Activated T-helper 1 cell treated with anti-CD3 and anti-CD28 coated beads, Interleukin-12 subunit alpha, Interleukin-12 subunit beta, Interleukin-2, Interleukin-4 antibody, amounts not matched to agents 30 ng/mL and 10 ng/mL and 1 ng/mL, durations not matched to agents 14 hours and 24 hours and 36 hours (primary cell): ENCODE measurements at regions of chr6 and their contacts with region 1.

Region 1: DNA sequence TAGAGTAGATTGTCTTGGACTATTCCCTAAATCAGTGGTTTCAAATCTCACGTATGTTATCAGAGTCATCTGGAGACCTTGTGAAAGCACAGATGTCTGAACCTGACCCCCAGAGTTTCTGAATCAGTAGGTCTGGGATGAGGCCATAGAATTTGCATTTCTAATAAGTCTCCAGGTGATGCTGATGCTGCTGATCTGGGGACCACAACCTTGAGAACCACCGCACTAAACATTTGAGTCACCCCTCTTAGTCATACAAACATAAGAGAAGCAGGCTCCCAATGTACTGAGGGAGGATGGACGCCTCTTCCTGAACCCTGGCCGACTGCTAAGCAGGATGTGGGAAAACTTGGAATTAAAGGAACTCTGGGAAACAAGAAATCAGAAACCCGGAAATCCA is 187.8 kb upstream of the PRDM1 start:
- DNase-seq: no peak
- H3K4me3 Mint-ChIP-seq: no peak overlapping the region
- H3K27ac Mint-ChIP-seq: no peak overlapping the region
- H3K4me1 Mint-ChIP-seq: peaks cover 34% of the 10 kb centered on the region
- H3K27me3 Mint-ChIP-seq: no peaks in the 10 kb centered on the region

Region 2: DNA sequence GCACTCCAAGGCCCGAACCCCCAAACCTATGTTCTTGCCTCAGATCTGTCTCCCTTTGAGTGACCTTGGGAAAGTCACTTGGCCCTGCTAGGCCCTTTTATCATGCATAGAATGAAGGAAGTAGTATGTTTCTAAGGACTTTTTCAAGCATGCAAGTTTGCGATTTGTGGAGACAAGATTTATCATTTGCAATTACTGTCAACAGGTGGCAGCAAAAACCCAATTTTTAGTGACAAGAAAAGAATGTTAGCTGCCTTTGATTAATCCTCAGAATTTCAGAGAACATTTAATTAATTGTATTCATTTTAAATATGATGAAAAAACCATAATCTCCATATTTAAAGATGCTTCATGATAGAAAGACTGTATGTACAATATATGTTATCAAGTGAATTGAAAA is 467.1 kb before region 1 on chr6:
- intact Hi-C with region 1: loop called (anchors 5 kb)
- DNase-seq: peak; percentile 12
- H3K4me3 Mint-ChIP-seq: no peak overlapping the region
- H3K27ac Mint-ChIP-seq: no peak overlapping the region
- H3K4me1 Mint-ChIP-seq: peaks cover 5% of the 10 kb centered on the region
- H3K27me3 Mint-ChIP-seq: peaks cover 35% of the 10 kb centered on the region

Region 3: GRCh38 chr6:105733565-105734162 is 164.6 kb before region 1 on chr6:
- intact Hi-C with region 1: loop called (anchors 2 kb)
- DNase-seq: no peak
- H3K4me3 Mint-ChIP-seq: no peak overlapping the region
- H3K27ac Mint-ChIP-seq: no peak overlapping the region
- H3K4me1 Mint-ChIP-seq: peaks cover 44% of the 10 kb centered on the region
- H3K27me3 Mint-ChIP-seq: peaks cover 3% of the 10 kb centered on the region

Region 4: GRCh38 chr6:105793130-105793529 is 105.2 kb before region 1 on chr6:
- intact Hi-C with region 1: loop called (anchors 2 kb)
- DNase-seq: no peak
- H3K4me3 Mint-ChIP-seq: peak overlapping the region; percentile 5
- H3K27ac Mint-ChIP-seq: peak overlapping the region; percentile 66
- H3K4me1 Mint-ChIP-seq: peaks cover 86% of the 10 kb centered on the region
- H3K27me3 Mint-ChIP-seq: no peaks in the 10 kb centered on the region

Region 5: GRCh38 chr6:105981002-105981887 is 83.0 kb after region 1 on chr6:
- intact Hi-C with region 1: loop called (anchors 1 kb)
- DNase-seq: peak; percentile 48
- H3K4me3 Mint-ChIP-seq: peak overlapping the region; percentile 84
- H3K27ac Mint-ChIP-seq: peak overlapping the region; percentile 91
- H3K4me1 Mint-ChIP-seq: peaks cover 79% of the 10 kb centered on the region
- H3K27me3 Mint-ChIP-seq: no peaks in the 10 kb centered on the region

Region 6: DNA sequence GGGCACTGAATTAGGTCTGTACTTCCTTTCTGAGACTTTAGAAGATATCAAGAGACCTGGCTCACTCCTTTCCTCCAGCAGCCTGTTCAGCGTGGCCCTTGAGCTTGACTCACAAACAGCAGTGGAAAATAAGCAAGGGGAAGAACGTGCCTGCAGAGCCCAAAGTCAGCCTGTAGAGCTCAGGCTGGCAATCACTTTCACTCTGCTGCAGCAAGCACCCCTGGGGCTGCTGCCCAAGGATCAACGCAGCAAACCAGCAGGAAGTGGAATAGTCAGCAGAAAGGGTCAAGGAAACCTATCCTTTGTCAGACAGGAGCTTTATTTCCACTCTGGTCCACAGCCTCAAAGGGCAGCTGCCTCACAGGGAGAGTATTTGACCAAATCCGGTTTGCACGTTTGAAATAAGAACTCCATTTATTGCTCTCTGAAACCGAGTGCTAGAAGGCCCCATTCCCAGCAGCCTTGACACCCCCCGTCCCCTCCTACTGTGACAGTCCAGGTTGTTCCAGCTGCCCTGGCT is 265.2 kb after region 1 on chr6:
- intact Hi-C with region 1: loop called (anchors 1 kb)
- DNase-seq: peak; percentile 49
- H3K4me3 Mint-ChIP-seq: peak overlapping the region; percentile 69
- H3K27ac Mint-ChIP-seq: peak overlapping the region; percentile 98
- H3K4me1 Mint-ChIP-seq: peaks cover 73% of the 10 kb centered on the region
- H3K27me3 Mint-ChIP-seq: peaks cover 3% of the 10 kb centered on the region

Region 7: GRCh38 chr6:106194949-106195921 is 296.9 kb after region 1 on chr6:
- intact Hi-C with region 1: loop called (anchors 2 kb)
- DNase-seq: no peak
- H3K4me3 Mint-ChIP-seq: peak overlapping the region; percentile 58
- H3K27ac Mint-ChIP-seq: peak overlapping the region; percentile 78
- H3K4me1 Mint-ChIP-seq: peaks cover 56% of the 10 kb centered on the region
- H3K27me3 Mint-ChIP-seq: no peaks in the 10 kb centered on the region